Common myeloid progenitor, CD34-positive (primary cell): ENCODE measurements at regions of chr19 and their contacts with region 1.

Region 1: DNA sequence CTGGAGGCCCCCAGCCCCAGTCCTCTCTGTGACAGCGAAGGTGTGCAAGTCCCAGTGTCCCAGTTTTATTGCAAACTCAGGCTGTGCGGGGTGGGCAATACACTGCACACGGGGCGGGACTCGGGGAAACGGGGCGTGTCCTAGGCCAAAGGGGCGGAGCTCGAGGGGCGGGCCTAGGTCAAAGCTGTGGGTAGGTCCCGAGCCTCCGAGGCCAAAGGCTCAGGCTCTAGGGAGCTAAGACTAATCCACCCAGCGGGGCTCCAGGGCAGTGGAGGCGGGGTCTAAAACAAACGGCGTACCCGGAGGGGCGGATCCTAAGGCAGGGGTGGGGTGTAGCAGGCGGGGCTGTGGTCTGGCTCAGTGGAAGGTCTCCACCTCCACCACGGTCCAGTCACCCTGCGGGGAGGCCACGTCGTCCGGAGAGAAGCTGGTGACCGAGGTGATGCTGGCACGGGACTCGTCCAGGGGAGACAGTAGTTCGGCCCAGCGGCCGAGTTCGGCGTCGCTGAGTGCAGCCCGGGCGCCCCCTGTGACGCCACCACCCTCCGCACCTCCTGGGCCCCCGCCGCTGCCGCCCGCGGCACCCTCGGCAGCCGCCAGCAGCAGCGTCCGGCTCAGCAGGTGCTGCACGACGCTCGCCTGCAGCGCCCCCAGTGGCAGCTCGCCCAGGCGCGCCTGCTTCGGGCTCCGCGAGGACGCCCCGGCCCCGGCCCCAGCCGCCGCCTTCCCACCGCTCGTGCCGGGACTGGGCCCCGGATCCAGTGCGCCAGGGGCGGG is 5.3 kb downstream of the PRR36 start:
- DNase-seq: peak; percentile 84 to 92 (median 91)
- H3K4me3 ChIP-seq: peak overlapping the region; percentile 0 to 83 (median 55)
- H3K27ac ChIP-seq: no peak overlapping the region
- H3K4me1 ChIP-seq: peaks cover 0 to 55% (median 49%) of the 10 kb centered on the region in 4 experiments
- H3K27me3 ChIP-seq: peaks cover 0 to 43% (median 19%) of the 10 kb centered on the region in 5 experiments

Region 2: DNA sequence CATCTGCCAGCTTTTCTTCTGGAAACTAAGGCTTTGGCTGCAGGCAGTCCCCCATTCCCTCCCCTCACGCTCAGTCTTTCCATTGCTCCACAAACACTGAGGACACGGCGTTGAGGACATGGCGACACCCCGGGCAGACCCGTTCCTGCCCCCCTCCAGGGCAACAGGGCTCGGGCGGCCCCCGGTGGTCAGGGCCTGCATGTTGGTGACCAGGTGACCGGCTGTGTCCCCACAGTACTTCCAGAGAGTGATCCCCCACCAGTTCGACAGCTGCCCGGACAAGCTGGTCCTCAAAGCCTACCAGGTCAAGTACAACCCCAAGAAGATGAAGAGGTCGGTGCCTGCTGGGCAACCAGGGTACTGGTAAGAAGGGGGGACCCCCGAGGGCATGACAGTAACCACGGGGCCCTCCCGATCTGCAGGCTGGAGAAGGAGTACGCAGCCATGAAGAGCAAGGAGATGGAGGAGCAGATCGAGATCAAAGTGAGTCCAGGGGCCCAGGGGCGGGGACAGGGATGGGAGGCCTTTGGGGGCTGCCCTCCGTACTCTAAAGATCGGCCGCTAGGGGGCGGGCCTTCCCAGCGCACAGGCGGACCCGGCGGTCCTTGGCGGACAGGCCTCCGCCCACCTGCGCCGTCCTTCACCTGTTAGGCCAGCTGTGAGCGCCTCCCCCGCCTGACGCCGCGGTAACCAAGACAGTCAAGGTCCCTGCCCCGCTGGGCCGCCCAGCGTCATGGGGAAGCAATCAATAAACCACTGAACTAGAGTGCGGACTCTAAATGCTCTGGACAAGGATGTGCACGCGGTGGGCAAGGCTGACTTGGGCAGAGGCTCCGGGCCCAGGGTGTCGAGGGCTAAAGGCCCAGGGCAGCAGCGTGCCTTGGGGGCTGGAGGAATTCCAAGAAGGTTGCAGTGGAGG is 15.8 kb before region 1 on chr19:
- CTCF ChIA-PET with region 1: interaction called, 20 read pairs
- POLR2A ChIA-PET with region 1: no interaction called
- DNase-seq: peak; percentile 61 to 72 (median 71)
- H3K4me3 ChIP-seq: peak overlapping the region in 1 of 7 experiments; percentile 33
- H3K27ac ChIP-seq: no peak overlapping the region
- H3K4me1 ChIP-seq: peaks cover 0 to 7% (median 5%) of the 10 kb centered on the region in 4 experiments
- H3K27me3 ChIP-seq: no peaks in the 10 kb centered on the region

Region 3: GRCh38 chr19:7899751-7900378 is 31.0 kb after region 1 on chr19:
- CTCF ChIA-PET with region 1: interaction called, 10 read pairs
- POLR2A ChIA-PET with region 1: no interaction called
- DNase-seq: no peak
- H3K4me3 ChIP-seq: no peak overlapping the region
- H3K27ac ChIP-seq: no peak overlapping the region
- H3K4me1 ChIP-seq: peaks cover 0 to 18% (median 16%) of the 10 kb centered on the region in 4 experiments
- H3K27me3 ChIP-seq: no peaks in the 10 kb centered on the region

Region 4: DNA sequence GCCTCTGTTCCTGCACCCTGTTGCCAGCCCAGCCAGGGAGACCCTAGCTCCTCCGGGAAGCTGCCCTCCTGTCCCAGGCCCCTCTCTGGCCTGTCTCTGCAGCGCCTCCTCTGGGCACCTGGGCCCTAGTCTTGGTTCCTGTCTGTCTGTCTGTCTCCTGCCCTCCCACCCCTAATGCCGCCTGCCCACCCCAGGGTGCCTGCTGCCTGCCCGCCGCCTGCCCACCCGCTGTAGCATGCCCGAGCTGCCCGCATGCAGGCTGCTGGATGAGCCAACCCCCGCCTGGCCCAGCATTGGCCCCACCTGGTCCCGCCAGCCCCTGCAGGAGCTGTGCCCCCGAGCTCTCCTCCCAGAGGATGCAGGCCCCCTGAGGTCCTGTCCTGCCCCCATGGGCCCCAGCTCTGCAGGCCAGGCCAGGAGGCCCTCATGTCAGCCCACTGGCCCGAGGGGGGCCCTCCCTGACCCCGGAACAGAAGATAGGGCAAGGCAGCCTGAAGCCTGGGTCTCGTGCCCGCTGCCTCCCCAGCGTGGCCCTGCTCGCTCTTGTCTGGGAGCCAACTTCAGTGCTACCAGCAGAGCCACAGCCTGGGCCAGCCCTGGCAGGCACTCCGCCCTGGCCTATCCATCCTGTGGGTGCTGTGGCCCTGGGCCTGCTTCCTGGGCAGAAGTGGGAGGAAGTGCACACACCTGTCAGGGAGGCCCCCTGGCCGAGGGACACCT is 40.0 kb after region 1 on chr19:
- CTCF ChIA-PET with region 1: interaction called, 12 read pairs
- POLR2A ChIA-PET with region 1: no interaction called
- DNase-seq: no peak
- H3K4me3 ChIP-seq: no peak overlapping the region
- H3K27ac ChIP-seq: no peak overlapping the region
- H3K4me1 ChIP-seq: peaks cover 0 to 14% (median 11%) of the 10 kb centered on the region in 4 experiments
- H3K27me3 ChIP-seq: no peaks in the 10 kb centered on the region